AG04450 (cell line): ENCODE measurements at regions of chr11 and their contacts with region 1.

Region 1: GRCh38 chr11:9015677-9016076 is 11.9 kb upstream of the NRIP3 start:
- DNase-seq: peak; percentile 53
- H3K4me3 ChIP-seq: no peak overlapping the region
- H3K27ac ChIP-seq: no peak overlapping the region
- H3K27me3 ChIP-seq: no peaks in the 10 kb centered on the region
- CTCF ChIP-seq: peak; percentile 81

Region 2: DNA sequence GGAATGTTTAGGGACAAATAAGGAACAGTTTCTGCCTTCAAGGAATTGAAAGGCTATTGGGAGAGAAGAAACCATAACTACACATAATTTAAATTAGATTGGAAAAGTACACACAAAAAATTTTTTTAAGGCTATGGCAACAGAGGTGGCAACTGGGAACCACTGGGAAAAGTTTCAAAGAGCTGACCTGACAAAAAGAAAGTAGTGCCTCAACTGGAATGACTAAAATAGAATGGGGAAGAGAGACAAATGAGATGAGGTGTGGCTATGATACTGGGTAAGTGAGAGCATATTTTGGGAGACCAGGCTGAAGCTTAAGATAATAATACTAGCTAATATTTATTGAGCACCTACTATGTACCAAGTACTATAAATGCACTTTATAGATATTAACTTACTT is 107.6 kb before region 1 on chr11:
- CTCF ChIA-PET with region 1: no interaction called
- POLR2A ChIA-PET with region 1: no interaction called
- DNase-seq: no peak
- H3K4me3 ChIP-seq: no peak overlapping the region
- H3K27ac ChIP-seq: no peak overlapping the region
- H3K27me3 ChIP-seq: no peaks in the 10 kb centered on the region
- CTCF ChIP-seq: no peak

Region 3: DNA sequence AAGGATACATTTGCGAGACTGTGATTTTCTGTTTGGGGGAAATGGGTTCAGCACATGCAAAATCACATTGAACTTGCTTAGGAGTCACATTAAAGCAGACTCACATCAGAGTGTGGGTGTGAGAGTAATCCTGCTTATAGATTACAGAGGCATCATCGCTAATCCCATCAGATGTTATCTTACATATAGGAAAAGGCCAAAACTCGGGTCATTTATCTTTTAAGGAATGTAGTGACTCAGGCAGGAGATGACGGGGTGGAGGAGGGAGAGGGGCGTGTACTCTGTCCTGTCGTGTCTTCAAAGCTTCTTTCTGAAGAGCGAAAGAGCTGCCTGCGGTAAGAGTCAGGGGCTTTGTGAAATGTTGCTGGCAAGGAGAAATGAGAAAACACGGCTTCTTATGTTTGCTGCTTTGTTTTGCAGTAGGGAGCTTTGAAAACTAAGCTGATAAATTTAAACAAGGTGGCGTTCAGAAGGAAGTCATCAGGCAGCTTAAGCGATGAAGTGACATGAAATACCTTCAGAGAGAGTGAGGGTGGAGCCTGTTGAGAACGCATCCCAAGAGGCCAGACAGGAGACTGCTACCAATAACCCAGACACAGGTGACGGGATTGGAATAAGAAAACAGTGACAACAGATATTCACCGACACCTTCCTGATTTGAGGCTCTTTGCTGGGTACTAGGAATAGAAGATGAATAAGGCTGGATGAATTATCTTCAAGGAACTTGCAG is 80.8 kb before region 1 on chr11:
- CTCF ChIA-PET with region 1: no interaction called
- POLR2A ChIA-PET with region 1: no interaction called
- DNase-seq: peak; percentile 58
- H3K4me3 ChIP-seq: no peak overlapping the region
- H3K27ac ChIP-seq: peak overlapping the region; percentile 63
- H3K27me3 ChIP-seq: no peaks in the 10 kb centered on the region
- CTCF ChIP-seq: no peak

Region 4: DNA sequence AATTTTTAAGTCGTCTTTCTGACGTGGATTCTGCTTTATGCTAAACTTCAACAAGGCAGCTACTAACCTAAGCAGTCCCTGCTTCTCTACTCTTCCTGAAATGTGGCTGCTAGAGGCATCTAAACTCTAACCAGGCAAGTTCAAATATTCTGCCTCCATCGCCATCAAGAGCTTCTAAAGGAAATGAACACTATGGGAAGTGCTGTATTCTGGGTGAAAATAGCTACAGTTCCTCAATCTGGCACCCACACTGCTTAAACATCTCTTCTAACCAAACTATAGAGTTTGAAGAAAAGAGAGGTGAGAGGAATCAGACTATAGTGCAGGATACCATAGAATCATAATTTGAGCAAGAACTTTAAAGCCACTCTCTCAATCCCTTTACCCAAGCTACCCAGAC is 18.2 kb before region 1 on chr11:
- CTCF ChIA-PET with region 1: interaction called, 10 read pairs
- POLR2A ChIA-PET with region 1: no interaction called
- DNase-seq: no peak
- H3K4me3 ChIP-seq: no peak overlapping the region
- H3K27ac ChIP-seq: no peak overlapping the region
- H3K27me3 ChIP-seq: no peaks in the 10 kb centered on the region
- CTCF ChIP-seq: no peak

Region 5: GRCh38 chr11:9005087-9005486 is 10.6 kb before region 1 on chr11:
- CTCF ChIA-PET with region 1: interaction called, 16 read pairs
- POLR2A ChIA-PET with region 1: interaction called, 3 read pairs
- DNase-seq: no peak
- H3K4me3 ChIP-seq: no peak overlapping the region
- H3K27ac ChIP-seq: no peak overlapping the region
- H3K27me3 ChIP-seq: peaks cover 27% of the 10 kb centered on the region
- CTCF ChIP-seq: no peak

Region 6: DNA sequence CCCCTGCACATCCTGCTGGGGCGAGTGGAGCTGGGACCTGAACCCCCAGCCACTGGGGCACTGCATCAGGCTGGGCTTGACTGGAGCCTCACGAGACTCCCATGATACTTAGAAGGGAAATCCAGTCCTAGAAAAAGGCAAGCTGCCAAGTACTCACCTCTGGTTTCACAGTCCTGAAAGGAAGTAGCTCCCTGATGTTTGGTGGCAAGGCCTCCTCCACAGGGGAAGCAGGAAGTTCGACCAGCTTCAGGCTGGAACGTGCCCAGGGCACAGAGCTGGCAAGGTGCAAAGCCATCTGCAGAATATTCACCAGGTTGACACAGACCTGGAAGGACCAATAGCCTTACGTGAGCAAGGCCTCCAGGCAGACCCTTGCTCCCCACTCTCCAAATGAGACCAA is 14.9 kb after region 1 on chr11:
- CTCF ChIA-PET with region 1: interaction called, 29 read pairs
- POLR2A ChIA-PET with region 1: no interaction called
- DNase-seq: no peak
- H3K4me3 ChIP-seq: no peak overlapping the region
- H3K27ac ChIP-seq: no peak overlapping the region
- H3K27me3 ChIP-seq: no peaks in the 10 kb centered on the region
- CTCF ChIP-seq: no peak

Region 7: DNA sequence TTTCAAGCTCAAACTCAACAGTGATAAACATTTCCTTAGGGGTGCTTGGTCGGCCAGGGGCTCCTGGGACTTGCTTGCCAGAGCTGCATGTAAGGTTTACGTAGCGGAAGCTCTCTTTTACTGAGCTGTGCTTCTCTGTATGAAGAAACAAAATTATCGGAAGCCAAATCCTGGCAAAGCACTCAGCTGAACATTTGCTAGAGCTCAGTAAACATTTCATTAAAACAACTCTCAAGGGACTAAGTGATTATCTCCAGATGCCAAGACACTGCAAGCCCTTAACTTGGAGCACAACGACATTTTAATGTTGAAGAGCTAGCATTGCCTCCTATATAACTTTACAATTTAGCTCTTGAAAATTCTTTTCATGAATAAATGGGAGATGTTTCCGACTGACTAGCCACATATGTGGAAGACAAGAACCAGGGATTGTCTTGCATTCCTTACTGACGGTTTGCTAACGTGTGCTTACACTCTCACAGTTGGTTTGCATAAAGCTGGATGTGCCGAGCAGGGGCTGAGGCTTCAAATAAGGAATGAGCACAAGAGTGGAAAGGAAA is 32.4 kb after region 1 on chr11:
- CTCF ChIA-PET with region 1: interaction called, 29 read pairs
- POLR2A ChIA-PET with region 1: no interaction called
- DNase-seq: peak; percentile 7
- H3K4me3 ChIP-seq: no peak overlapping the region
- H3K27ac ChIP-seq: no peak overlapping the region
- H3K27me3 ChIP-seq: no peaks in the 10 kb centered on the region
- CTCF ChIP-seq: no peak

Region 8: DNA sequence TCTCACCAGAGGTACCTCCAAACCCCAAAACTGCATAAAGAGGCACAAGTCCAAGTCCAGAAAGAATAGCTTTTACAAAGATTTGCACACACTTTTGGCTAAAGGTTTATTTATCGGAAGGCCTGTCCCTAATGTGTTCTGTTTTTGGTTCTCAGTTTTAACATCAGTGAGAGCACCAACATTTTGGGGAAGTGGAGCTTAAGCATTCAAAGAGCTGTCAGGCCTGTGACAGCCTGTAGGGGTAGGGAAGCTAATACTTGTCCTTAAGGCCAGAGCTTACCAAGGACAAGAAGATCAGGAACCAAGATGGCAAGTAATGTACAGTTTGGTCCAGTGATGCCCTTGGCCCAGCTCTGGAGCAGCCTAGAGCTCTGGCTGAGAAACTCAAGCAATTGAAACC is 114.6 kb after region 1 on chr11:
- CTCF ChIA-PET with region 1: interaction called, 11 read pairs
- POLR2A ChIA-PET with region 1: no interaction called
- DNase-seq: no peak
- H3K4me3 ChIP-seq: no peak overlapping the region
- H3K27ac ChIP-seq: no peak overlapping the region
- H3K27me3 ChIP-seq: no peaks in the 10 kb centered on the region
- CTCF ChIP-seq: no peak